ENCODE measurements at regions of chr3 and their contacts with region 1.

Region 1: GRCh38 chr3:21894459-21895340 is 143.7 kb upstream of the ZNF385D start:
- DNase-seq: no peak
- H3K4me3 ChIP-seq: no peak overlapping the region
- H3K27ac ChIP-seq: no peak overlapping the region
- H3K4me1 ChIP-seq: no peaks in the 10 kb centered on the region
- H3K27me3 ChIP-seq: no peaks in the 10 kb centered on the region
- CTCF ChIP-seq: peak; percentile 45

Region 2: GRCh38 chr3:20225769-20226168 is 1668.9 kb before region 1 on chr3:
- CTCF ChIA-PET with region 1: no interaction called
- POLR2A ChIA-PET with region 1: no interaction called
- intact Hi-C with region 1: loop called (anchors 5 kb)
- DNase-seq: peak; percentile 62
- H3K4me3 ChIP-seq: no peak overlapping the region
- H3K27ac ChIP-seq: no peak overlapping the region
- H3K4me1 ChIP-seq: no peaks in the 10 kb centered on the region
- H3K27me3 ChIP-seq: peaks cover 12% of the 10 kb centered on the region
- CTCF ChIP-seq: peak; percentile 52

Region 3: GRCh38 chr3:20340324-20340928 is 1554.3 kb before region 1 on chr3:
- CTCF ChIA-PET with region 1: no interaction called
- POLR2A ChIA-PET with region 1: no interaction called
- intact Hi-C with region 1: loop called (anchors 5 kb)
- DNase-seq: peak; percentile 69
- H3K4me3 ChIP-seq: no peak overlapping the region
- H3K27ac ChIP-seq: no peak overlapping the region
- H3K4me1 ChIP-seq: no peaks in the 10 kb centered on the region
- H3K27me3 ChIP-seq: no peaks in the 10 kb centered on the region
- CTCF ChIP-seq: peak; percentile 83

Region 4: DNA sequence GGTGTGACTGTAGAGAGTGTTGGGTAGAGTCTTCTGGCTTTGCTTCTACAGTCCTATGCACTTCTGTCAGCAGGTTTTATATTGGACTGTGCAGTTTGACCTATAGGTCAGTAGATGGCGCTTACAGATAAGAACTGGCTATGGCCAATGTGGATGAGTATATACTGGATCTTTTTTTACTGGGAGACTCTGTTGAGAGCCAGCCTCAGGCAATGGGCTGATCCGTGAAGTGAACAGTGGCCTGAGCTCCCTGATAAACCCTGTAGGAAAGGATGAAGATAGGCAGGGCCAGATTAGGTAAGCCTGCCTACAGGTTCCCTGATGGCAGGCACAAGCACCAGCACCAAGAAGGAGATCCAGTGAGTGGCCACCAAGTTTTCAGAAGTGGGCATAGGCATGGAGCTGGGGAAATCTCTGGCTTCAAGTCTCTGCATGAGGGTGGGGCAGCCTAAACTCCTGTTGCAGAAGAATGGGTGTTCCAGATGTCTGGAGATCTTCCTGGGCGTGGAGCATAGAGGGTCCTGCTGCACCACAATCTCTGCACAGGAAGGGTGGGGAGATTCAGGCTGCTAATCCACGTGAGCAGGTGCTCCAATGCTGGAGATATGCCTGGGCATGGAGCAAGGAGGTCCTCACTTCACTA is 1382.7 kb before region 1 on chr3:
- CTCF ChIA-PET with region 1: no interaction called
- POLR2A ChIA-PET with region 1: no interaction called
- intact Hi-C with region 1: loop called (anchors 5 kb)
- DNase-seq: peak; percentile 50
- H3K4me3 ChIP-seq: no peak overlapping the region
- H3K27ac ChIP-seq: no peak overlapping the region
- H3K4me1 ChIP-seq: no peaks in the 10 kb centered on the region
- H3K27me3 ChIP-seq: no peaks in the 10 kb centered on the region
- CTCF ChIP-seq: peak; percentile 66

Measured in A673 (cell line).